Adrenal gland (tissue), 19 donors: ENCODE measurements at regions of chr10 and their contacts with region 1.

Region 1: GRCh38 chr10:79195091-79195923 is 126.5 kb downstream of the ZMIZ1 start:
- DNase-seq: peak; percentile 85 to 96 (median 91)
- H3K4me3 ChIP-seq: no peak overlapping the region
- H3K27ac ChIP-seq: peak overlapping the region; percentile 7 to 72 (median 69)
- H3K4me1 ChIP-seq: peaks cover 11 to 38% of the 10 kb centered on the region in 2 donors
- H3K27me3 ChIP-seq: no peaks in the 10 kb centered on the region
- CTCF ChIP-seq: peak; percentile 86 to 98 (median 96)
- POLR2A ChIP-seq: no peak

Region 2: DNA sequence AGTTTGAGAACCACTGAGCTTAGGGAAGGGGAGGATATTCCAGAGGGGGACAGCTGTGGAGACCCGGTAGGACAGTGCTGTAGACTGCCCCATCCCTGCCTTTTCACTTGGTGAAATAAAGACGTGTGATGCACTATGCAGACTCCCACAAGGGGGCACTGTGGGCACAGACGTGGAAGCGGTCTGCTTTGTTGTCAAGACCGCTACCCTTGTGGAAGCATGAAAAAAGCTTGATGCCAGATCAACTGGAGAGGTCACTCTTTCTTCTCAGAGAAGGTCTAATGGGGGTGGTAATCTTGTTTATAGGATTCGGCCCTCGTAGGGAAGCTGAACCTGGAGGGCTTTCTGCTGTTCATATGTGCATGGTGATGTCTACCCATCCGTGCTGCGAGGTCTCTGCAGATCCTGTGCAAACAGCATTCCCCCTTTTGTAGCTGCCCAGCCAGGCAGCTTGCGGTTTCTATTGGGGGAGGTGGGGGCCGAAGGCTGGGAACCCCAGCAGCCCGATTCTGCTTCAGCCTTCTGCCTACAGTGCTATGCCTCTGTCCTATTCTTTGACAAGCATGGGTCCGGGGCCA is 1147.9 kb before region 1 on chr10:
- intact Hi-C with region 1: loop called (anchors 5 to 10 kb)
- DNase-seq: peak; percentile 82 to 97 (median 90)
- H3K4me3 ChIP-seq: no peak overlapping the region
- H3K27ac ChIP-seq: no peak overlapping the region
- H3K4me1 ChIP-seq: peaks cover 0 to 13% of the 10 kb centered on the region in 2 donors
- H3K27me3 ChIP-seq: no peaks in the 10 kb centered on the region
- CTCF ChIP-seq: peak; percentile 84 to 92 (median 90)
- POLR2A ChIP-seq: no peak

Region 3: DNA sequence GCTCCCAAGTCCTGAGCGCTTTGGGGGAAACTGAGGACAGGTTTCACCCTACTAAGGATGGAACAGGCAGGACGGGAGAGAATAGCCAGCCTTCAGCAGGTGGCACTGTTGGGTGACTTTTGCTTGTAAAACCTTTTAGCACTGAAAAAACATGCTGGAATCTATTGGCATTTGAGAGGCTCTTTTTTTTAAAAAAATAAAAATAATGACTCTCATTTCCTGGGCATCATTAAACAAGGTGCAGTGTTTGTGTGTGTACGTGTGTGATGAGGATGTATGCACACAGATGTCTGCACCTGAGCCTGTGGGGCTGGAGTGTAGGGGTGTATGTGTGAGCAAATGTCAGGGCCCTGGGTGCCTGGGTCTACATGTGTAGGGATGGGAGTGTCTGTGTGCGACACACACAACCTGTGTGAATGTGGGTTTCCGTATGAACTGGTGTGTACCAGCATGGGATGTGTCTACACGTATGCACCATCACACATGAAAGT is 983.7 kb before region 1 on chr10:
- intact Hi-C with region 1: loop called in 1 of 2 experiments (anchors 10 kb)
- DNase-seq: peak in 6 of 7 donors; percentile 31 to 78 (median 40)
- H3K4me3 ChIP-seq: no peak overlapping the region
- H3K27ac ChIP-seq: no peak overlapping the region
- H3K4me1 ChIP-seq: peaks cover 0 to 16% of the 10 kb centered on the region in 2 donors
- H3K27me3 ChIP-seq: no peaks in the 10 kb centered on the region
- CTCF ChIP-seq: peak; percentile 11 to 69 (median 38)
- POLR2A ChIP-seq: no peak

Region 4: DNA sequence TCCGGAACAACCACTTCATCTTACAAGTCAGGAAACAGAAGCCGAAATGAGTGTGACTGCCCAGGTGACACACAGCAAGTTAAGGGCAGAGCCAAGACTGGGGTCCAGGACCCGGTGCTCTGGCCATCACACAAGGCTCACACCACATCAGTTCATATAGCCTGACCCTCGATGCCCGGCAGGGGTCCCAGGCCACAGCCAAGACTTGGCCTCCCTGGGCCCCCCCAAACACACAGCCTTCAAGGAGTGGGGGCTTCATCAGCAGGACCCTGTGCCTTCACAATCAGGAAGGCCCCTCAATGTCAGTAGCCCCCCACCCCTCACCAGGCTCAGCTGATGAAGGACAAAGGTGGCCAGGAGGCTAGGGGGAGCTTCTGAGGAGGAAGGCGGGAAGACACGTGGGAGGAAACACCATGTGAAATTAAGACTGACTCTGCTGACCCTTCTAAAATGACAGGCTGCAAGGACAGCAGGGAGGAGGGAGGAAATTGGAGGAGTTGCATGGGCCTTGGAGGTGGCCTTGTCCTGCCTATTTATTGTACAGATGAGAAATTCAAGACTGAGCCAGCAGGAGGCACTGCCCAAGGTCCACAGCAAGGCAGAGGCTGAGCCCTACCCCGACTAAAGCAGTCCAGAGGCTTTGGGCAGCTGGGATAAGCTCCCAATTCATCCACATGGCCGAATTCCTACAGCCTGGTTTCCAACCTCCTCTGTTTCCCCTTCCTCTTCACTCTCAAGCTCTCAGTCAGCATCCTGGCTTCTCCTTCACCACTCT is 342.7 kb before region 1 on chr10:
- intact Hi-C with region 1: loop called in 1 of 2 experiments (anchors 10 kb)
- DNase-seq: peak in 6 of 7 donors; percentile 45 to 71 (median 58)
- H3K4me3 ChIP-seq: no peak overlapping the region
- H3K27ac ChIP-seq: no peak overlapping the region
- H3K4me1 ChIP-seq: peaks cover 4 to 10% of the 10 kb centered on the region in 2 donors
- H3K27me3 ChIP-seq: no peaks in the 10 kb centered on the region
- CTCF ChIP-seq: peak in 5 of 6 experiments; percentile 38 to 57 (median 49)
- POLR2A ChIP-seq: no peak

Region 5: DNA sequence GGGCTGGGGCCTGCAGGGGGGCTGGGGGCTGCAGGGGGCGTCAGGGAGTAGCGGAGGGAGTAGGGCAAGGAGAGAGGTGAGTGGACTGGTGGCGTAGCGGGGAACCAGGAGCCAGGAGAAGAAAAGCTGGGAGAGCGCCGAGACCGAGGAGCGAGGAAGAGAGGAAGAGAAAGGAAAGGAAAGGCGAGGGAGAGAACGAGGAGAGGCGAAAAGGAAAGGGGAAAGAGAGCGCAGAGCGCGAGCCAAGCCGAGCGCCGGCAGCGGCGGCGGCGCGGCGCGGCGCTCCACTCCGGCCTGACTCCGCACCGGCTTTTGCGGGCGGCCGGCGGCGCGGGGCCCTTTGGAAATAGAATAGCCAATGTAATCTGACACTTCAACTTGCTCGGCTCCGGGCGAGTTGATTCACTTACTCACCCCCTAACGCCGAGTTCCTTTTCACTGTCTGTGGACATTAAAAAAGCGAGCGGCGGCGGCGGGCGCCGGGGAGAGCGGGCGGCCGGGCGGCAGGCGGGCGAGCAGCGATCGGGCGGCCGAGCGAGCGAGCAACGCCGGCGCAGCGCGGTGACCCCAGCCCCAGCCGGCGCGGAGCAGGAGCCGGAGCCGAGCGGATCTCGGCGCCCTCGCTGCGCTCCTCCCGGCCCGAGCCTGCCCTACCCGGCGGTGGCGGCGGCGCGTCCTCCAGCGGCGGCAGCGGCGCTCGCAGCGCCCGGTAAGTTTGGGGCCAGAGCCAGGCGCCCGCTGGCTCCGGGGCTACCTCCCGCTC is 126.6 kb before region 1 on chr10 and contains the start of gene ZMIZ1:
- intact Hi-C with region 1: loop called (anchors 5 kb)
- DNase-seq: peak; percentile 90 to 97 (median 93)
- H3K4me3 ChIP-seq: peak within 1 kb of the TSS; percentile 77 to 99 (median 82)
- H3K27ac ChIP-seq: peak within 1 kb of the TSS; percentile 74 to 99 (median 91)
- H3K4me1 ChIP-seq: peaks cover 32% of the 10 kb centered on the region in 2 donors
- H3K27me3 ChIP-seq: no peaks in the 10 kb centered on the region
- CTCF ChIP-seq: peak in 3 of 6 experiments; percentile 29 to 40 (median 30)
- POLR2A ChIP-seq: peak; percentile 93 to 96
- total RNA-seq, gene ZMIZ1: 6.6 to 113 (median 56.4) TPM